Kidney (tissue), 22 donors: ENCODE measurements at regions of chr11 and their contacts with region 1.

Region 1: GRCh38 chr11:66365711-66366619 is 5.6 kb downstream of the SLC29A2 start:
- DNase-seq: no peak
- H3K4me3 ChIP-seq: no peak overlapping the region
- H3K27ac ChIP-seq: no peak overlapping the region
- H3K4me1 ChIP-seq: peaks cover 0 to 6% (median 0%) of the 10 kb centered on the region in 3 donors
- H3K27me3 ChIP-seq: no peaks in the 10 kb centered on the region
- CTCF ChIP-seq: no peak

Region 2: GRCh38 chr11:66176649-66177048 is 189.3 kb before region 1 on chr11:
- intact Hi-C with region 1: loop called (anchors 5 kb)
- DNase-seq: no peak
- H3K4me3 ChIP-seq: no peak overlapping the region
- H3K27ac ChIP-seq: no peak overlapping the region
- H3K4me1 ChIP-seq: no peaks in the 10 kb centered on the region
- H3K27me3 ChIP-seq: no peaks in the 10 kb centered on the region
- CTCF ChIP-seq: no peak